Left colon (tissue), 2 donors: ENCODE measurements at regions of chr4 and their contacts with region 1.

Region 1: GRCh38 chr4:182806259-182807252 is 110.6 kb downstream of the DCTD start:
- DNase-seq: peak; percentile 34 to 75
- ATAC-seq: peak; percentile 82

Region 2: DNA sequence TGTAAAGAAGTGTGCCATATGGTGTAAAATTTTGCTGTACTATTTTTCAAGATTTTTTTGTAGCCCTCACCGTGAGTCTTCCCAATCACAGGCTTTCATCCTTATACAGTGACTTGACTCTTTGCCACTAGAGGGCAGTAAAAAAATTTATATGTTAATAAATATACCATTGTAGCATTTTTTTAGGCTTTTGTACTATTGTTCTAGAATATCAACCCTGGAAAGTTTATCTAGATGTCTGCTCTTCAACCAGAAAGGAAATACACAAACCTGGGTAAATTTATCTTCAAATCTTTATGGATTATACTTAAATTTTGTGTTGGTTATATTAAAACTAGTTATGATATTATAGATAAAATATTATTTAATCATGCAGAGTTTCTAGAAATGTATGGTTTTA is 328.1 kb before region 1 on chr4:
- intact Hi-C with region 1: loop called (anchors 5 to 10 kb)
- DNase-seq: no peak
- ATAC-seq: no peak

Region 3: DNA sequence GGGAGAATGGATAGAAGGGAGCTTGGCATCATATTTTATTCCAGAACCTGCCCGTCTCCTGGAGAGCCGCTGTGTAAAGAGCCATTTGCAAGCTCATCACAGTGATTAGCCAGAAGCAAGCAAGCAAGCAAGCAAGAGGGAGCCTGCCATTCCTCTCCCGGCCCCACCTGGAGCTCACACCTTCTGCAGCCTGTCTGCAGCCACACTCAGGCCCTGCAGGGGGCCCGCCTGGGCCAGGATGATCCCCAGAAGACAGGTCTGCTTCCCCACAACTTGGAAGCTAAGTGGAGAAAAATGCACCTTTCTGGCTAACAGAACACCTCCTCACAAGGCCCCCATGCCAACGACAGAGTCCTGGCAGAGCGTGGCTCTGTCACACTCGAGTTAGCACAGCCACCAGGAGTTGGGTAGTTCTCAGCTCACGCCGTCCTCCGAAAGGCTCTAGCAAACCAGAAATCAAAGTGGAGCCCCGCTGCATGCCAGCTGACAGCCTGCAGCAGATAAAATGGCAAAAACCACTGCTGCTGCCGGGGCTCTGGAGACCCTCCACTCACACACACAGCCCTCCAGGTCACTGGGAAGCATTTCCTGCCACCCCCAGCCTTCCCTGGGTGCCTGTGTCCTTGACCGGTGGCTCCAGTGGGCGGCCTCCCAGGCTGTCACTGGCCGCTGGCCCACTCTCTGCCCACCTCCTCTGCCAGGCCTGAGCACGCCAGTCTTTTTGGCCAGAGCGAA is 55.8 kb after region 1 on chr4:
- intact Hi-C with region 1: no loop called
- DNase-seq: no peak
- ATAC-seq: no peak